Mammary epithelial cell (primary cell): ENCODE measurements at regions of chr2 and their contacts with region 1.

Region 1: GRCh38 chr2:136550181-136550580 is 215.2 kb upstream of the THSD7B start:
- DNase-seq: no peak
- H3K4me3 ChIP-seq: no peak overlapping the region
- H3K27ac ChIP-seq: no peak overlapping the region
- H3K4me1 ChIP-seq: no peaks in the 10 kb centered on the region
- H3K27me3 ChIP-seq: no peaks in the 10 kb centered on the region
- CTCF ChIP-seq: no peak

Region 2: DNA sequence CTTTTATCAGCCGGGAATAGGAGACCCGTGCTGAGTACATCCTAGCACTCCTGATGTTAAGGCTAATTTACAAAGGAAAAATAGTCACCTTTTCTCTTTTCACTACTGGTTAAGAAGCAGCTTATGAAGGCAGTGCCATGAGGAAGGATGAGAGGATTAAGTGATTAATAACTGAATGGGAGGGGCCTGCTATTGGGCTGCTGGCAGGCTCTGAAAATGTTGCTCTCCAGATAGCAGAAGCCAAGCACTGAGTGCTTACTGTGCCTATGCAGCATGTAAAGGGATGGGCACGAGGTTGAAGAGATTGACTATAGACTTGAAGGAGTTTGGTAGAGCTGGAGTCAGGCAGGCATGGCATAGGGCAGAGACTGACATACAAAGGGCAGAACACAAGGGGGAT is 67.2 kb before region 1 on chr2:
- CTCF ChIA-PET with region 1: no interaction called
- dilution Hi-C with region 1: no loop called
- in situ Hi-C with region 1: no loop called
- intact Hi-C with region 1: no loop called
- DNase-seq: no peak
- H3K4me3 ChIP-seq: no peak overlapping the region
- H3K27ac ChIP-seq: no peak overlapping the region
- H3K4me1 ChIP-seq: no peaks in the 10 kb centered on the region
- H3K27me3 ChIP-seq: no peaks in the 10 kb centered on the region
- CTCF ChIP-seq: no peak

Region 3: GRCh38 chr2:136495636-136496035 is 54.5 kb before region 1 on chr2:
- CTCF ChIA-PET with region 1: no interaction called
- dilution Hi-C with region 1: loop called (anchors 5 kb)
- in situ Hi-C with region 1: no loop called
- intact Hi-C with region 1: no loop called
- DNase-seq: no peak
- H3K4me3 ChIP-seq: no peak overlapping the region
- H3K27ac ChIP-seq: no peak overlapping the region
- H3K4me1 ChIP-seq: no peaks in the 10 kb centered on the region
- H3K27me3 ChIP-seq: no peaks in the 10 kb centered on the region
- CTCF ChIP-seq: no peak

Region 4: DNA sequence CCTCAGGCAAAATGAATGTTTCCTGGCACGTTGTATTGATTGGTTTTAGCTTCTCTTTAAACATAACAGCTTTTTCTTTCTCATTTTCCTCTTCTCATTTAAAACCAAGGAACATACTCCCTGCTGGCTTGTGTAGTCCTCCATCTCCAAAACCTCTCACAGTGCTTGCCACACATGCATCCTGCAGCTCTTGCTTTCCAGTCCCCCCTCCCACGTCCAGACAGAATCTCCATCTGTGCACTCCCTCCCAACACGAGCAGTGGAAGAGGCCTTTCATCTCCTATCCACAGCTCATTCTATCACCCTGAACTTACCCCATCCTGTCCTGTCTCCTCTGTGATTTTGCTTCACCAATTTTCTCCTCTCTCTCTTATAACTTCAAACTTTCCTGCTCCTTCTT is 115.6 kb after region 1 on chr2:
- CTCF ChIA-PET with region 1: no interaction called
- dilution Hi-C with region 1: no loop called
- in situ Hi-C with region 1: no loop called
- intact Hi-C with region 1: no loop called
- DNase-seq: no peak
- H3K4me3 ChIP-seq: no peak overlapping the region
- H3K27ac ChIP-seq: no peak overlapping the region
- H3K4me1 ChIP-seq: no peaks in the 10 kb centered on the region
- H3K27me3 ChIP-seq: no peaks in the 10 kb centered on the region
- CTCF ChIP-seq: no peak

Region 5: GRCh38 chr2:136727973-136728699 is 178.0 kb after region 1 on chr2:
- CTCF ChIA-PET with region 1: no interaction called
- dilution Hi-C with region 1: no loop called
- in situ Hi-C with region 1: no loop called
- intact Hi-C with region 1: no loop called
- DNase-seq: no peak
- H3K4me3 ChIP-seq: no peak overlapping the region
- H3K27ac ChIP-seq: no peak overlapping the region
- H3K4me1 ChIP-seq: no peaks in the 10 kb centered on the region
- H3K27me3 ChIP-seq: no peaks in the 10 kb centered on the region
- CTCF ChIP-seq: no peak